Heart right ventricle (tissue), 16 donors: ENCODE measurements at regions of chr9 and their contacts with region 1.

Region 1: GRCh38 chr9:136849038-136849959 is at the start of gene PHPT1:
- DNase-seq: peak; percentile 98
- ATAC-seq: peak; percentile 82 to 95 (median 91)
- H3K4me3 ChIP-seq: peak within 1 kb of the TSS; percentile 74 to 99 (median 82)
- H3K27ac ChIP-seq: peak within 1 kb of the TSS; percentile 77 to 96 (median 92)
- H3K4me1 ChIP-seq: peaks cover 18 to 53% (median 46%) of the 10 kb centered on the region in 9 donors
- H3K27me3 ChIP-seq: peaks cover 0 to 40% (median 17%) of the 10 kb centered on the region in 7 donors
- CTCF ChIP-seq: no peak
- total RNA-seq, gene PHPT1: 310 to 376 (median 327) TPM

Region 2: DNA sequence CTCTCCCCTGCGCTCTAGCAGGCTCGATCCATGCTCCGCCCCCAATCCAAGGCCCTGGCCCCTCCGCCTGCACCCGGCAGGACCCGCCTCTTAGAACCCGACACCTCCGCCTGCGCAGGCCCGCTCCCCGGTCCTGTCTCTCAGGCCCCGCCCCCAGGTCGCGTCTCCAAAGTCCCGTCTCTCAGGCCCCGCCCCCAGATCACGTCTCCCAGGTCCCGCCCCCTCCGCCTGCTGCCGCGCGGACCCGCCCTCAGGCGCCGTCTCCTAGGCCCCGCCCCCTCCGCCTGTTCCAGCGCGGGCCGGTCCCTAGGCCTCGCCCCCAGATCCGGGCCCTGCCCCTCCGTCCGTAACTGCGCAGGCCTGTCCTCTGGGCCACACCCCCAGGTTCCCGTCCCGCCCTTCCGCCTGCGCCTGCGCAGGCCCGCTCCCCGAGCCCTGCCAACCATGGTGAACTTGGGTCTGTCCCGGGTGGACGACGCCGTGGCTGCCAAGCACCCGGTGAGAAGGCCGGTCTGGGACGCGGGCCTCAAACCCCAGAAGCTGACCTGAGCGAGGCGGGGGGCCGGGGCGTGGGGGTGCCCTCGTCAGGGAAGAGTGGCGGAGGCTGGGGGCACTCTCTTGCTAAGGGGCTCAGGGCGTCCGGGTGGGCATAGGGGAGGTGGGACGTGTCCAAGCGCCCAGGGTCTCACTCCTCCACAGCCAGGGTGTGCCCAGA is 58.2 kb before region 1 on chr9 and contains the start of gene TMEM141:
- intact Hi-C with region 1: loop called in 3 of 10 experiments (anchors 2 to 10 kb)
- DNase-seq: peak; percentile 100
- ATAC-seq: peak; percentile 95 to 98 (median 95)
- H3K4me3 ChIP-seq: peak within 1 kb of the TSS; percentile 57 to 93 (median 77)
- H3K27ac ChIP-seq: peak within 1 kb of the TSS; percentile 88 to 98 (median 96)
- H3K4me1 ChIP-seq: peaks cover 13 to 65% (median 40%) of the 10 kb centered on the region in 9 donors
- H3K27me3 ChIP-seq: peaks cover 0 to 3% (median 0%) of the 10 kb centered on the region in 7 donors
- CTCF ChIP-seq: no peak
- total RNA-seq, gene TMEM141: 48.1 to 83.4 (median 61.8) TPM

Region 3: GRCh38 chr9:136885950-136886578 is 36.8 kb after region 1 on chr9 and contains the start of gene TRAF2:
- intact Hi-C with region 1: loop called in 2 of 10 experiments (anchors 1 kb)
- DNase-seq: peak; percentile 98 to 99
- ATAC-seq: peak; percentile 93 to 99 (median 98)
- H3K4me3 ChIP-seq: peak within 1 kb of the TSS; percentile 80 to 99 (median 95)
- H3K27ac ChIP-seq: peak within 1 kb of the TSS in 9 of 10 donors; percentile 83 to 95 (median 93)
- H3K4me1 ChIP-seq: peaks cover 13 to 48% (median 37%) of the 10 kb centered on the region in 9 donors
- H3K27me3 ChIP-seq: no peaks in the 10 kb centered on the region
- CTCF ChIP-seq: peak in 2 of 9 donors; percentile 23 to 26
- total RNA-seq, gene TRAF2: 5.4 to 14.8 (median 9.7) TPM

Region 4: DNA sequence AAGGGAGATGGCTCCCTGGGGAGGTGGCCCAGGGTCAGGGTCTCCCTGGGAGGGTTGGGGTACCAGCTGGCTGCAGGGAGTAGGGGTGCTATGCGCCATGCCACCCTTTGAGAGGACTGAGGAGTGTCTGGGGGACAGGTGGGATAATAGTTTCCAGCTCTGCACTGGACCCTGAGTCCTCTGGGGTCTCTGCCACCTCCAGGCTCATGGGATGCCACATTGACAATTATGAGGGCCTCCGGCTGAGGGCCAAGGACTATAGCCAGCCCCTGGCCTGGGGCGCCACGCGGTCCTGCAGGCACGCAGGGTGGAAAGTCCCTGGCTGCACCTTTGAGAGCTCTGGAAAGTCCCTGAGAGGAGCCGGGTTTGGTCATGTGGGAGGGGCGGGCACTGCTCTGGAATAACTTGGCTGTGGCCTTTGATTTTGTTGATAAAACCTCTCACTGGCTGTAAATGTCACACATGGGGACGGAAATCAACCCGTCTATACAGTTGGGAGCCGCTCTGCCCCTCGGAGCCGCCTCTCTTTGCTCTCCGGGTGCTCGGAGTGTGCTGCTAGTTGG is 53.0 kb after region 1 on chr9:
- intact Hi-C with region 1: loop called in 1 of 10 experiments (anchors 5 kb)
- DNase-seq: peak; percentile 70 to 85
- ATAC-seq: peak; percentile 80 to 95 (median 91)
- H3K4me3 ChIP-seq: peak overlapping the region in 3 of 10 donors; percentile 2 to 10 (median 10)
- H3K27ac ChIP-seq: peak overlapping the region; percentile 50 to 90 (median 84)
- H3K4me1 ChIP-seq: peaks cover 19 to 53% (median 35%) of the 10 kb centered on the region in 9 donors
- H3K27me3 ChIP-seq: no peaks in the 10 kb centered on the region
- CTCF ChIP-seq: no peak

Region 5: GRCh38 chr9:136928591-136928990 is 79.3 kb after region 1 on chr9:
- intact Hi-C with region 1: loop called in 3 of 10 experiments (anchors 5 kb)
- DNase-seq: peak; percentile 42 to 70
- ATAC-seq: peak; percentile 63 to 93 (median 84)
- H3K4me3 ChIP-seq: peak overlapping the region in 4 of 10 donors; percentile 8 to 14 (median 12)
- H3K27ac ChIP-seq: peak overlapping the region; percentile 43 to 91 (median 84)
- H3K4me1 ChIP-seq: peaks cover 19 to 69% (median 58%) of the 10 kb centered on the region in 9 donors
- H3K27me3 ChIP-seq: no peaks in the 10 kb centered on the region
- CTCF ChIP-seq: peak in 5 of 9 donors; percentile 6 to 43 (median 22)

Region 6: DNA sequence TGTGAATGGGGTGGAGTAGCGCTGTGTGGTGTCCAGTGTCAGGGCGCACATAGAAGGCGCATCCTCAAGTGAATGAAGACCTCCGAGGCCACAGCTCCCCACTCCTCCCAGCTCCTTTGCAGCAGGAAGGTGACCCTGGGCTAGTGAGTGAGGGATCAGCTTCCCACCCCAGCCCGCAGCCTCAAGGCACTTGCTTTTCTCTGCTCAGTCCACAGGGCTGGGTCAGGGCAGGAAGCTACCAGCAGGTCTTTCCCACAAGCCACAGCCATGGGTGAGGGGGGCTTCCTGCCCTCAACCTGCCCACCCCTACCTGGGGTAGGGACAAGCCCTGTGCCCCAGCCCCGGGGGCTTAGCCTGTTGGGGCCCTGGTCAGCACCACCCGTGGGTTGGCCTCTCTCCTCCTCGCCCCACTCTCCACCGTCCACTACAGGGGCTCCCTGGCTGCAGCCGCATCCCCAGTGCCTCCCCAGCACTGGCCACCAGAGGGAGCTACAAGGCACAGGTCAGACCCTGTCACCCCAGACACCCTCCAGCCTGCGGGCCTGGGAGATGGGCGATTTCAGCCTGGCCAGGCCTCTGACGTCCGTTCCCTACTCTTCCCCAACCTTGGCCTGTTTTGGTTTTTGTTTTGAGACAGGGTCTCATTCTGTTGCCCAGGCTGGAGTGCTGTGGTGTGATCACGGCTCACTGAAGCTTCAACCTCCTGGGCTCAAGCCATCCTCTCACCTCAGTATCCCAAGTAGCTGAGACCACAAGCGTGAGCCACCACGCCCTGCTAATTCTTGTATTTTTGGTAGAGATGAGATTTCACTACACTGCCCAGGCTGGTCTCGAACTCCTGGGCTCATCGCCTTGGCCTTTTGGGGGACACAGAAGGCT is 180.0 kb after region 1 on chr9:
- intact Hi-C with region 1: loop called in 1 of 10 experiments (anchors 10 kb)
- DNase-seq: peak; percentile 78 to 88
- ATAC-seq: peak; percentile 59 to 83 (median 70)
- H3K4me3 ChIP-seq: peak overlapping the region in 9 of 10 donors; percentile 1 to 88 (median 68)
- H3K27ac ChIP-seq: peak overlapping the region in 3 of 10 donors; percentile 15 to 83 (median 53)
- H3K4me1 ChIP-seq: peaks cover 12 to 55% (median 30%) of the 10 kb centered on the region in 9 donors
- H3K27me3 ChIP-seq: no peaks in the 10 kb centered on the region
- CTCF ChIP-seq: peak; percentile 82 to 96 (median 89)